CD4-positive, alpha-beta T cell (primary cell): ENCODE measurements at regions of chr14 and their contacts with region 1.

Region 1: GRCh38 chr14:90368946-90369721 is 27.7 kb upstream of the CALM1 start:
- DNase-seq: peak in 3 of 14 experiments; percentile 63 to 71 (median 66)
- ATAC-seq: peak; percentile 100
- H3K4me3 ChIP-seq: no peak overlapping the region
- H3K4me3 Mint-ChIP-seq: no peak overlapping the region
- H3K27ac ChIP-seq: no peak overlapping the region
- H3K27ac Mint-ChIP-seq: no peak overlapping the region
- H3K4me1 ChIP-seq: no peaks in the 10 kb centered on the region
- H3K4me1 Mint-ChIP-seq: peaks cover 5% of the 10 kb centered on the region
- H3K27me3 ChIP-seq: no peaks in the 10 kb centered on the region
- H3K27me3 Mint-ChIP-seq: no peaks in the 10 kb centered on the region
- CTCF ChIP-seq: peak; percentile 74

Region 2: DNA sequence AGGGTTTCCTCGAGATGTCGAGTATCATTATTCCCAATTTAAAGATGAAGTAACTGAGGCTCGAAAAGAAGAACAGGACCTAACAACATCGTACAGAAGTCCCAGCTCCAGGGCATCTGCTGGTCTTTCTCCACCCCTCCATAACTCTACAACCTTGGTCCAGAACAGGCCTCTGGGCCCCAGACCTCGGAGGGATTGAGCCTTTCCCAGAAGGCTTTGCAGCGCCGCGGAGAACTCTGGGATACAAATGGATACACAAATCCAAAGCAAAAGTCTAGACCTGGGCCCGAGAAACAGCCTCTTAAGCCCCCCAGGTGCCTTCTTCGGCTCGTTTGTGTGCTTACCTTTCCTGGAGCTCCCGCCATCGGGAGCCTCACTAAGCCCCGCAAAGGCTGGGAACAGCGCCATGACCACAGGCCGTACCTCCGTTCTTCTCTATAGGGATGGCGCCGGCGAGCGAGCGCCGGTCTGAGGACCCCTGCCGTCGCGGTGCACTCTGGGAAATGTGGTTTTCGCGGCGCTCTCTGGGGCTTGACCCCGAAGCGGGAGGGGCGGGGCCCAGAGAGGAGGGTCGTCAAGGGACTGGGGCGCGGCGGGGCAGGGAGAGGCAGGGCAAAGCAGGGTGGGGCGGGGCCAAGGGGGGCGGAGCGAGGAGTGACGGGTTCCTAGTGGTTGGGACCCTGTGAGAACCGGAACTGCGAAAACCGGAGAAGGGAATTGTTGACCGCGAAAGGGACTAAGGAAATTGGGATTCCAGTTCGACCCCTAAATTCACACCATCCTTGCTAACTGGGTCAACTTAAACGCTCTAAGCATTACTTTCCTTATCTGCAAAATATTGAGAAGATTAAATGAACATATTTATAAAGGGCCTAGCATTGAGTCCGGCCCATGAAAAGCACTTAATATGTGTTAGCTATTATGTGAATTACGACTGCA is 37.4 kb before region 1 on chr14 and contains the start of gene NRDE2:
- CTCF ChIA-PET with region 1: no interaction called
- POLR2A ChIA-PET with region 1: no interaction called
- intact Hi-C with region 1: no loop called
- DNase-seq: peak; percentile 81 to 99 (median 93)
- ATAC-seq: peak; percentile 95
- H3K4me3 ChIP-seq: peak within 1 kb of the TSS; percentile 83
- H3K4me3 Mint-ChIP-seq: peak within 1 kb of the TSS; percentile 93
- H3K27ac ChIP-seq: peak within 1 kb of the TSS; percentile 60 to 72
- H3K27ac Mint-ChIP-seq: peak within 1 kb of the TSS; percentile 93
- H3K4me1 ChIP-seq: peaks cover 13% of the 10 kb centered on the region
- H3K4me1 Mint-ChIP-seq: peaks cover 40% of the 10 kb centered on the region
- H3K27me3 ChIP-seq: no peaks in the 10 kb centered on the region
- H3K27me3 Mint-ChIP-seq: peaks cover 11% of the 10 kb centered on the region
- CTCF ChIP-seq: no peak
- total RNA-seq, gene NRDE2: 17.5 to 17.9 TPM

Region 3: DNA sequence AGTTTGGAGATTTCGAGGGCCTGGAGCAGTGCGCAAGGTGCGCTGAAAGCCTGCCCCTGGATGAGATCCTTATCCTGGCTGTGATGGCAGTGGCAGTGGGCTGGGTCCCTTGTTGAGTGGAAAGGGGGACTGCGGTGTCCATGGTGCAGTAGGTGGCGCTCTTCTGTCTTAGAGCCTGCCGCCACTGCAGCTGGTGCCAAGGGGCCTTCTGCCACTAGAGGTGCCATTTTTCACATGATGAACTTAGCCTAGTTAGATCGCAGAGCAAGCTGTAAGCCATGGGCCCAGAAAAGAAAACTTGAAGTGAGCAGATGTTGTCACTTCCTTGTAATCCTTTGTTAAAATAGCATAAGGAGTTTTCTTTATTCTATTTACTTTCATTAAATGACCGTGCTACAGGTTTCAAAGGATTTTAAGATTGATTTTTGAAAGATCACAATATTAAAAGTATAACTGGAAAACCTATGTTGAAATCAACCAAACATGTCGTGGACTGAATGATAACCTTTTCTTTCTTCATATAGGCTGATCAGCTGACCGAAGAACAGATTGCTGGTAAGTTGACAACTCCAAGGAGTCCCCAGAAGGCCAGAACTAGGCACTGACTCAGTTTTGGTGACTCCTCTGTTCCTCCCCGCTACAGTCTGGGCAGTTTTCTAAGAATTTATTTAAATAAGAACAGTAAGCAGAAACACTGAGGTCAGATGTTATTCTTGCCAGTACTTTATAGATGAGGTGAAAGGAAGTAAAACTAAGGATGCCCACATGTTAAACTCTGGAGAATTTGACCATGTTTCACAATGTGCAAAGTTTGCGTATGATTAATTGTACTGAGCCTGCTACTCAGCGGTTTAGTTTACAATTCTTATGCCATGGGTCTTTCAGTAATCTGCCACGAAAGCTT is 30.7 kb after region 1 on chr14:
- CTCF ChIA-PET with region 1: interaction called, 32 read pairs
- POLR2A ChIA-PET with region 1: interaction called, 12 read pairs
- intact Hi-C with region 1: loop called (anchors 1 to 5 kb)
- DNase-seq: peak; percentile 72 to 94 (median 80)
- ATAC-seq: peak; percentile 48
- H3K4me3 ChIP-seq: peak overlapping the region; percentile 62
- H3K4me3 Mint-ChIP-seq: peak overlapping the region; percentile 100
- H3K27ac ChIP-seq: peak overlapping the region; percentile 86 to 88
- H3K27ac Mint-ChIP-seq: peak overlapping the region; percentile 100
- H3K4me1 ChIP-seq: peaks cover 52% of the 10 kb centered on the region
- H3K4me1 Mint-ChIP-seq: peaks cover 73% of the 10 kb centered on the region
- H3K27me3 ChIP-seq: no peaks in the 10 kb centered on the region
- H3K27me3 Mint-ChIP-seq: peaks cover 9% of the 10 kb centered on the region
- CTCF ChIP-seq: peak; percentile 100

Region 4: GRCh38 chr14:90518941-90519256 is 149.8 kb after region 1 on chr14:
- CTCF ChIA-PET with region 1: no interaction called
- POLR2A ChIA-PET with region 1: no interaction called
- intact Hi-C with region 1: loop called (anchors 1 kb)
- DNase-seq: peak; percentile 6 to 75 (median 26)
- ATAC-seq: no peak
- H3K4me3 ChIP-seq: no peak overlapping the region
- H3K4me3 Mint-ChIP-seq: no peak overlapping the region
- H3K27ac ChIP-seq: no peak overlapping the region
- H3K27ac Mint-ChIP-seq: no peak overlapping the region
- H3K4me1 ChIP-seq: peaks cover 5% of the 10 kb centered on the region
- H3K4me1 Mint-ChIP-seq: no peaks in the 10 kb centered on the region
- H3K27me3 ChIP-seq: peaks cover 0 to 3% of the 10 kb centered on the region in 2 experiments
- H3K27me3 Mint-ChIP-seq: no peaks in the 10 kb centered on the region
- CTCF ChIP-seq: peak; percentile 50

Region 5: DNA sequence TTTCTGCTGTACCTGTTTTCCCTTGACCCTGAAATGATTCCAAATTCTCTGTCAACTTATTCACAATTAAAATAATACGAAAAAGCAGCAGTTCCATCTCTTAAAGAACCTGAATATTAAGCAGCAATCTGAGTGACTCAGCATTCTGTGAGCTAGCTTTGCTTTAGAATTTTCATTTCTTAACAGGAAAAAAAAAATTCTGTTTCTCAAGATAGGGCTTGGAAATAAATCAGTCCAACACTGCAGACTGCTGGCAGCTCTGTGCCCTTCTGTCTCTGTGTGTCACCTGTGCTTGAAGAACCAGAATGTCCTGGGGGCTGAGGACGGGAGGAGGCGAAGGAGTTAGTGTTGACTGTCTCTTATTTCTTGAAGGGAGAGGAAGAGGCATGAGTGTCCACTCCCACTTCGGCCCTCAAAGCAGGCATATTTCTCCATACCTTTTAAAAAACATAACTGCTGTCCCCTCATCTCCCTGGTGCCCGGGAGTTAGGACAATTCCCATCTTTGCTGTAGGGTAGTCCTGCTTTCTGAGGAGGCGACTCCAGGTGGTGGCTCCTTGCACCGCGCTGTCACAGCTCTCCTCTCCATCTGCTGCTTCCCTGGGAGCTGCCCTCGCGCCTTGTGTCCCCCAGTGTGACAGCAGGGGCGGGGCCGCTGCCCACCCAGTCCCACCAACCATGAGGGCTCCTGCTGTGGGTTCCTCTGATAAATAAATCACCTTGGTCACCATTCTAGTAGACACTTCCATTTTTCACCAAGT is 230.8 kb after region 1 on chr14:
- CTCF ChIA-PET with region 1: no interaction called
- POLR2A ChIA-PET with region 1: no interaction called
- intact Hi-C with region 1: loop called in 1 of 2 experiments (anchors 10 kb)
- DNase-seq: no peak
- ATAC-seq: no peak
- H3K4me3 ChIP-seq: no peak overlapping the region
- H3K4me3 Mint-ChIP-seq: no peak overlapping the region
- H3K27ac ChIP-seq: no peak overlapping the region
- H3K27ac Mint-ChIP-seq: no peak overlapping the region
- H3K4me1 ChIP-seq: no peaks in the 10 kb centered on the region
- H3K4me1 Mint-ChIP-seq: no peaks in the 10 kb centered on the region
- H3K27me3 ChIP-seq: no peaks in the 10 kb centered on the region
- H3K27me3 Mint-ChIP-seq: peaks cover 29% of the 10 kb centered on the region
- CTCF ChIP-seq: no peak

Region 6: DNA sequence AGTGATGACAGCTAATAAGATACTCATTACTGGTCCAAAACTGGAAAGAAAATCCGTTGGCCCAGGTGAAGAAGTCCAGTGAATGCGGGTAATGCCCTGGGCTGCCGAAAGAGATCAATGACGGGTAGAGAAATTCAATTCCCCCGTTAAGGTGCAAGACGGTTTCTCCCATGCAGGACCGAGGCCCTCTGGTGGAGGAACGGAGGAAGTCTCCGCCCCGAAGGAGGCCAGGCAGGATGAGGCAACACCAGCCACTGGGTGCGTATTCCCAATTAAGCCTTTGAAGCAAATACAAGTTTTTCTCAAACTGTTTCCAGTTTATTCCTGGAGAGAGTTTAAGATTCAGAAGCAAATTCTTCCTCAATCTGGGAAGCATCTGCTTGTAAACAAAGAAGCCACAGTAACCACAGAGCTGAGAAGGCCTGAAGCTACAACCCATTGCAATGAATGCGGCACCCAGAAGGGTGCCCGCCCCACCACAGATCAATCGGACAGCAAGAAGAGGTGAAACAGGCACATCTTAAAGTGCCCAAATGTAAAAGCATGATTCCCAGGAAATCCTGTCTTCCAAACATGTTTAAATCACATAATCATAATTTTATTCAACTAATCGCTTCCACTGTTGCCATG is 328.6 kb after region 1 on chr14:
- CTCF ChIA-PET with region 1: interaction called, 10 read pairs
- POLR2A ChIA-PET with region 1: no interaction called
- intact Hi-C with region 1: loop called in 1 of 2 experiments (anchors 1 kb)
- DNase-seq: peak; percentile 61 to 82 (median 71)
- ATAC-seq: peak; percentile 97
- H3K4me3 ChIP-seq: no peak overlapping the region
- H3K4me3 Mint-ChIP-seq: no peak overlapping the region
- H3K27ac ChIP-seq: no peak overlapping the region
- H3K27ac Mint-ChIP-seq: no peak overlapping the region
- H3K4me1 ChIP-seq: peaks cover 6% of the 10 kb centered on the region
- H3K4me1 Mint-ChIP-seq: no peaks in the 10 kb centered on the region
- H3K27me3 ChIP-seq: no peaks in the 10 kb centered on the region
- H3K27me3 Mint-ChIP-seq: no peaks in the 10 kb centered on the region
- CTCF ChIP-seq: peak; percentile 94

Region 7: DNA sequence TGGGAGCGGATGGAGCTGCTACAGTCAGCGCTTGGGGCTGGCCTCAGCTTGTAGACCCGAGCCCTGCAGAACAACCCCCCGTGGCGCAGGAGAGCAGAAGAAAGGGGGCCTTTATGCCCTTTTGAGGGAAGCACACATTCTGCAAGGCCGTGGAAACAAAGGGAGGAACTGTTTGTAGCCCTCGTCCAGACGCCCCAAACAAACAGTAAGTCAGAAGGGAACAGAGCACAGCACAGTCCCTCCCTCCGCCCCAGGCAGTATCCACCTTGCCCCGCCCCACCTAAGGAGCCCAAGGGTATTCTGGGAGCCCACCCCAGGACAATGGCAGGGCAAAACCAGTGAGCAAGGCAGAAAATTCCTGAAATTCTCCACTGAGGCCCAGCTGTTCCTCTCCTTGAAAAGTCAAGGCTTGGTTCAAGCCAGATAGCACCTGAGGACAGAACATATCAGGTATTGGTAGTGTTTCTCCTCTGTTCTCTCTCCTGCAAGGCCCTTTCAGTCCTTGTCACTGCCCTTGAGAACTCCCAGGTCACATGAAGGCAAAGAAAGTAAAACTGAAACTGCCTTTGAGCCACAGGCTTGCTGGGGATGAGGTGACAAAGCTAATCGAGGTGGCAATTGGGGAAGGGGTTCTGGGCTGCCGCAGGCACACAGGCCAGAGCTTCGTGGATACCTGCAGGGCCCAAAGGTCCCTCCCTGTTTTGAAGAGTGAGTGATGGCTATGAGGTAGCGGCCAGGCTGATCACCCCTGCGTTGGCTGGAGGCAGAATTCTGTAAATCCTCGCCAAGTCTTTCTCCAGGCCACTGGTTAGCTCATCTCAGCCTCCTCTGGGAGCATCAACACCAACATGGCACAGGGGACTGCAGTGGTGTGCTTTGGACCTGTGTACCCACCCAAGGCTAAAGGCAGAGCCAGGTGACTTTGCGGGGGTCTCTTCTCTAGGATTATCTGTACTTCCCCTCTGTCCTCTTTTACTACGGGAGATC is 745.2 kb after region 1 on chr14:
- CTCF ChIA-PET with region 1: no interaction called
- POLR2A ChIA-PET with region 1: no interaction called
- intact Hi-C with region 1: no loop called
- DNase-seq: peak; percentile 30 to 89 (median 54)
- ATAC-seq: peak; percentile 77
- H3K4me3 ChIP-seq: peak overlapping the region; percentile 62
- H3K4me3 Mint-ChIP-seq: peak overlapping the region; percentile 92
- H3K27ac ChIP-seq: peak overlapping the region; percentile 83 to 88
- H3K27ac Mint-ChIP-seq: peak overlapping the region; percentile 91
- H3K4me1 ChIP-seq: peaks cover 65% of the 10 kb centered on the region
- H3K4me1 Mint-ChIP-seq: peaks cover 74% of the 10 kb centered on the region
- H3K27me3 ChIP-seq: no peaks in the 10 kb centered on the region
- H3K27me3 Mint-ChIP-seq: no peaks in the 10 kb centered on the region
- CTCF ChIP-seq: no peak